Breast epithelium (tissue), 4 donors: ENCODE measurements at regions of chr12 and their contacts with region 1.

Region 1: GRCh38 chr12:130689408-130690405 is 26.4 kb downstream of the RIMBP2 start:
- DNase-seq: no peak
- H3K4me3 ChIP-seq: no peak overlapping the region
- H3K27ac ChIP-seq: no peak overlapping the region
- H3K4me1 ChIP-seq: no peaks in the 10 kb centered on the region
- H3K27me3 ChIP-seq: no peaks in the 10 kb centered on the region
- CTCF ChIP-seq: no peak
- POLR2A ChIP-seq: no peak

Region 2: DNA sequence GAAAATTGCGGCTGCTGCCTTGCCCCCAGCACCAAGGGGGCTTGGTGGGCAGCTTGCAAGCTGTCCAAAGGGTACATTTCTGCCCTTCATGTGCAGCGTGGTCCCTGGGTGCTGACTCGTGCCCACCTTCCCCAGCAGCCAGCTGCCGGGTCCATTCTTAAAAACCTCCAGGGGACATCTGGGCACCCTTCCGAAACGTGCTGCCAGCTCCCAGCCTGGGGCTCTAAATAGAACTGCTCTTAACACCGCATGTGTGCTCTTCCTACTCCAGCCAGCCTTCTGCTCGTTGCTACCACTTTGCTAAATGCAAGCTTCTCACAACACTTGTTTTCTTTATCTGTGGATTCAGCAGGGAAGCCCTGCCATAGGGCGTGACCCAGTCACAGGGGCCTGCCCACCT is 39.6 kb before region 1 on chr12:
- intact Hi-C with region 1: loop called (anchors 1 kb)
- DNase-seq: peak in 1 of 2 donors; percentile 14
- H3K4me3 ChIP-seq: no peak overlapping the region
- H3K27ac ChIP-seq: no peak overlapping the region
- H3K4me1 ChIP-seq: no peaks in the 10 kb centered on the region
- H3K27me3 ChIP-seq: no peaks in the 10 kb centered on the region
- CTCF ChIP-seq: no peak
- POLR2A ChIP-seq: no peak